Activated naive CD4-positive, alpha-beta T cell treated with anti-CD3 and anti-CD28 coated beads for 36 hours (primary cell): ENCODE measurements at regions of chr10 and their contacts with region 1.

Region 1: DNA sequence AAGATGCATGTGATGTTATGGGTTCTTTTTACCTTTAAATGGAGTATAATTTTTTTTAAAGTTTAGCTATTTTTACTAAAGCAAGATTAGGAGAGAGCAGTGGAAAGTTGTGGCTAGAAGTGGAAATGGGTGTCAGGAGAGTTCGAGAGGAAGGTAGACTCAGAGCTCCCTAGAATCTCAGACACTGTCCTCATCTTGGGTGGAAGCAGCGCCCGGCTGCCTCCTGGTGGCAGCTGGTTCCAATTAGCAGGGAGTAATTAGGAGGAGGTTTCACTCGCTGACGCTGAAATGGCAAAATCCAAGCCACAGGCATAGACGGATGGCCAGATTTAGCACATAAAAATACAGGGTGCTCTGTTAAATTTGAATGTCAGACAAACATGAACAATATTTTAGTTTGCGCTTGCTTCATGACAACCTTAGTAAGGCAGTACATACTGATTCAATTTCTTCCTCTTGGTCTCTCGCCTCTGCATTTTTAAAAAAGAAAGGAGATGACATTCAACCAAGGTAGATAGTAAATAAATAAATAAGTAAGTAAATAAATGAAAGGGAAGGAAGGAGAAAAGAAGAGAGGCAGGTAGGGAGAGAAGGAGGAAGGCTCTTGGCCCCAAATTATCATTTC is 58.5 kb downstream of the LGI1 start:
- DNase-seq: peak; percentile 66
- H3K4me3 Mint-ChIP-seq: no peak overlapping the region
- H3K27ac Mint-ChIP-seq: no peak overlapping the region
- H3K4me1 Mint-ChIP-seq: peaks cover 4% of the 10 kb centered on the region
- H3K27me3 Mint-ChIP-seq: peaks cover 31% of the 10 kb centered on the region

Region 2: GRCh38 chr10:93746844-93747284 is 69.4 kb before region 1 on chr10:
- CTCF ChIA-PET with region 1: interaction called, 3 read pairs
- intact Hi-C with region 1: loop called (anchors 2 kb)
- DNase-seq: no peak
- H3K4me3 Mint-ChIP-seq: no peak overlapping the region
- H3K27ac Mint-ChIP-seq: no peak overlapping the region
- H3K4me1 Mint-ChIP-seq: peaks cover 3% of the 10 kb centered on the region
- H3K27me3 Mint-ChIP-seq: peaks cover 2% of the 10 kb centered on the region

Region 3: GRCh38 chr10:93893646-93894515 is 77.6 kb after region 1 on chr10 and contains the start of gene SLC35G1:
- CTCF ChIA-PET with region 1: no interaction called
- intact Hi-C with region 1: loop called (anchors 1 kb)
- DNase-seq: peak; percentile 71
- H3K4me3 Mint-ChIP-seq: peak within 1 kb of the TSS; percentile 82
- H3K27ac Mint-ChIP-seq: peak within 1 kb of the TSS; percentile 37
- H3K4me1 Mint-ChIP-seq: peaks cover 37% of the 10 kb centered on the region
- H3K27me3 Mint-ChIP-seq: no peaks in the 10 kb centered on the region
- total RNA-seq, gene SLC35G1: 3.8 to 4.1 TPM

Region 4: GRCh38 chr10:94320285-94320914 is 504.2 kb after region 1 on chr10:
- CTCF ChIA-PET with region 1: no interaction called
- intact Hi-C with region 1: loop called (anchors 1 kb)
- DNase-seq: peak; percentile 79
- H3K4me3 Mint-ChIP-seq: no peak overlapping the region
- H3K27ac Mint-ChIP-seq: no peak overlapping the region
- H3K4me1 Mint-ChIP-seq: no peaks in the 10 kb centered on the region
- H3K27me3 Mint-ChIP-seq: no peaks in the 10 kb centered on the region